CD4-positive, alpha-beta T cell (primary cell): ENCODE measurements at regions of chr7 and their contacts with region 1.

Region 1: DNA sequence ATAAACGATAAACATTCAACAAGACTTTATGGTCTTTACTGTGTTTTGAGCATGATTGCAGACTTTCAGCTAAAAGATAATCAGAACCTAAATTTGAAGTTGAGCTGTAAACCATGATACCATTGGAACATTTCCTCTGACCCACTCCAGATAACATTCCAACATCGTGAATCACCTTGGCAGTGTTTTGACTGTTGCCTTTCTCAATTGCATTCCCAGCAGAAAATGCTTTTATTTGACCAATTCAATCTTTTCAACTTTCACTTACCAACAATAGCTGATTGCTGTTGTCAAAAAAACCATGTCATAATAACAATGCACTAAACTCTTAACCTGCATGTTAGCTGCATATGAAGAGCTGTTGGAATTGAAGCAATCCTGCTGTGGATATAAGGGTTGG is 165.5 kb downstream of the MDFIC start:
- DNase-seq: no peak
- ATAC-seq: no peak
- H3K4me3 ChIP-seq: no peak overlapping the region
- H3K4me3 Mint-ChIP-seq: no peak overlapping the region
- H3K27ac ChIP-seq: no peak overlapping the region
- H3K27ac Mint-ChIP-seq: no peak overlapping the region
- H3K4me1 ChIP-seq: no peaks in the 10 kb centered on the region
- H3K4me1 Mint-ChIP-seq: no peaks in the 10 kb centered on the region
- H3K27me3 ChIP-seq: no peaks in the 10 kb centered on the region
- H3K27me3 Mint-ChIP-seq: no peaks in the 10 kb centered on the region
- CTCF ChIP-seq: no peak

Region 2: DNA sequence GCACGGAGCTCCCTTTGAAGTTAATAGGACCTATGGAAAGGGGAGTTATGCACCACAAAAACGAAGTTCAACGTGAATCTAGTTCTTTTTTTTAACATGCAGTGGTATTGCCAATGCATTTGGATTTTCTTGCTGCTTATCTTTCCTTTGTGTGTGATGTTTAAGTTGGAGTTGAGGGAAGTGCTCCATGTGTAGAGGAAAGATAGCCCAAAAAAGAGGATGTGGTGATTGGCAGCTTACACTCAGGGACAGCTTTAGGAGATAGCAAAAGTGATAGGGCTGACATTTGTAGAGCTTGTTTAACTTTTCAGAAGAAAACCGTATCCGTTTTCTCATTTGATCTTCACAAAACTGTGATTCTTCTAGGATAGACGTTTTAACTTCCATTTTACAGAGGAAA is 64.2 kb before region 1 on chr7:
- CTCF ChIA-PET with region 1: no interaction called
- POLR2A ChIA-PET with region 1: no interaction called
- intact Hi-C with region 1: loop called in 1 of 2 experiments (anchors 2 kb)
- DNase-seq: no peak
- ATAC-seq: no peak
- H3K4me3 ChIP-seq: no peak overlapping the region
- H3K4me3 Mint-ChIP-seq: peak overlapping the region; percentile 8
- H3K27ac ChIP-seq: no peak overlapping the region
- H3K27ac Mint-ChIP-seq: no peak overlapping the region
- H3K4me1 ChIP-seq: peaks cover 9% of the 10 kb centered on the region
- H3K4me1 Mint-ChIP-seq: peaks cover 27% of the 10 kb centered on the region
- H3K27me3 ChIP-seq: no peaks in the 10 kb centered on the region
- H3K27me3 Mint-ChIP-seq: no peaks in the 10 kb centered on the region
- CTCF ChIP-seq: no peak